IMR-90 (cell line): ENCODE measurements at regions of chr13 and their contacts with region 1.

Region 1: GRCh38 chr13:71524613-71525304 is 342.2 kb downstream of the DACH1 start:
- DNase-seq: no peak
- ATAC-seq: peak; percentile 21; the same call in 1 of the 2 replicates
- H3K4me3 ChIP-seq: no peak overlapping the region
- H3K27ac ChIP-seq: no peak overlapping the region
- H3K4me1 ChIP-seq: no peaks in the 10 kb centered on the region; the same call in 1 of the 2 replicates
- H3K27me3 ChIP-seq: no peaks in the 10 kb centered on the region
- CTCF ChIP-seq: no peak
- POLR2A ChIP-seq: no peak
- RAD21 ChIP-seq: no peak

Region 2: GRCh38 chr13:70668283-70668682 is 856.5 kb before region 1 on chr13:
- CTCF ChIA-PET with region 1: no interaction called
- POLR2A ChIA-PET with region 1: no interaction called
- dilution Hi-C with region 1: no loop called
- in situ Hi-C with region 1: no loop called
- intact Hi-C with region 1: no loop called
- DNase-seq: no peak
- ATAC-seq: no peak
- H3K4me3 ChIP-seq: no peak overlapping the region
- H3K27ac ChIP-seq: no peak overlapping the region
- H3K4me1 ChIP-seq: no peaks in the 10 kb centered on the region
- H3K27me3 ChIP-seq: no peaks in the 10 kb centered on the region
- CTCF ChIP-seq: no peak
- POLR2A ChIP-seq: no peak
- RAD21 ChIP-seq: no peak

Region 3: DNA sequence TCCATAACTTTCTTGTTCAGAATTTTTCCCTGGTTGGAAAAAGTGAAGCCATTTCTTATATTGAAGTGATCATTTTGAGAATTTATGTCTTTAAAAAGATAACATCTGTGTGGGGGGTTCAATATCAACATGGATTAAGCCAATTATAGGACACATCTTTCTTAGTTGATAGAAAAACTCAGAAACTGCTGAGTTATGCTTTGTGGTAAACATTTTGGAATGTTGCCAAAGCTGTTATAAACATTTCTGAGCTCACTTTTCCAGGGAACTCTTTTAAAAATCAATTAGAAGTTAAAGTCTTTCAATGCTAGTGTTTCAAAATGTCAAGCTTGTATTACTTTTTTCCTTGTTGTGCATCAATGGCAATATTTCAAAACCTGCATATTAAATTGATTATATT is 93.4 kb after region 1 on chr13:
- CTCF ChIA-PET with region 1: no interaction called
- POLR2A ChIA-PET with region 1: no interaction called
- dilution Hi-C with region 1: no loop called
- in situ Hi-C with region 1: no loop called
- intact Hi-C with region 1: no loop called
- DNase-seq: peak; percentile 53
- ATAC-seq: no peak
- H3K4me3 ChIP-seq: no peak overlapping the region
- H3K27ac ChIP-seq: no peak overlapping the region
- H3K4me1 ChIP-seq: no peaks in the 10 kb centered on the region
- H3K27me3 ChIP-seq: no peaks in the 10 kb centered on the region
- CTCF ChIP-seq: no peak
- POLR2A ChIP-seq: no peak
- RAD21 ChIP-seq: no peak

Region 4: GRCh38 chr13:71759651-71760511 is 235.1 kb after region 1 on chr13:
- CTCF ChIA-PET with region 1: interaction called, 10 read pairs
- POLR2A ChIA-PET with region 1: no interaction called
- dilution Hi-C with region 1: no loop called
- in situ Hi-C with region 1: no loop called
- intact Hi-C with region 1: no loop called
- DNase-seq: no peak
- ATAC-seq: no peak; the same call in 1 of the 2 replicates
- H3K4me3 ChIP-seq: no peak overlapping the region
- H3K27ac ChIP-seq: no peak overlapping the region
- H3K4me1 ChIP-seq: no peaks in the 10 kb centered on the region
- H3K27me3 ChIP-seq: no peaks in the 10 kb centered on the region
- CTCF ChIP-seq: no peak
- POLR2A ChIP-seq: no peak
- RAD21 ChIP-seq: no peak